Stomach (tissue), 19 donors: ENCODE measurements at regions of chr19 and their contacts with region 1.

Region 1: DNA sequence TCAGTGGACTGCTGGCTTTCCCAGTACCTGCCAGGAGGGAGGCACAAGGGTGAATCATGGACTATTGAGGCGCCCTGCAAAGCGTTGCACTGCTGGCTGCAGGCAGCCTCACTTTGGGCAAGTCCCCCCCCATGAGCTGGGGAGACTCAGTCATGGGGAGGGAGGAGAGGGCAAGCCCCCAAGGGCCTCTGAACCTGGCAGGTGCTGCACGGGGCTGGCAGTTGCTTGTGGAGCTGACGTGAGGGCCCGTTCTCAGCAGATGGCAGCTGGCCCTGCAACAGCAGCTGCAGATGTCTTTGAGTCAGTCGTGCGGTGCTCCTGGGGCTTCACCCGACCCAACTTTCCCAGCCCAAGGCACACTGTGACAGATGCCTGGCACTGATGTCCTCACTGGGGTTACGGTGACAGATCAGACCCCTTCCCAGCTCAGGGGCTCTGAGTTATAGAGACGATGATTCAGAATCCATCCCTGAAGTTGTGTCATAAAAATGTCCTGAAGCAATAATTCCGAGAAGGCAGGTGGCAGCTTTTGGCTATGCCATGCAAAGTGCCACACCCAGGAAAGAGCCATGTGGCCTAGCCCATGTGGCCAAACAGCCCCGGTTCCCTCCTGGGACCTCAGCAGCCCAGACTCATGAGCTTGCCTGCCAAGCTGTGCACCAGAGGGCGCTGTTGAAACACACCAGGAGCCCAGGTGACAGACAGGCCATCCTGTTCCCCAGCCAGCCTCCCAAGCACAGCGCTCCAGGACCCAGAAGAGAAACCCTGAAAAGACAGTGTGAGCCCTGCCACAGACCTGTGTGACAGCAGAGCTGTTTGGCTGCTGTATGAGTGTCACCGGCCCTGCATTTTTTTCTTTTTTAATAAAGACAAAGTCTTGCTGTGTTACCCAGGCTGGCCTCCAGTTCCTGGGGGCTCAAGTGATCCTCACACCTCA is 53.6 kb upstream of the LDLR start:
- DNase-seq: peak; percentile 95
- H3K4me3 ChIP-seq: no peak overlapping the region
- H3K27ac ChIP-seq: peak overlapping the region; percentile 5 to 67 (median 32)
- H3K4me1 ChIP-seq: peaks cover 4 to 16% (median 12%) of the 10 kb centered on the region in 4 donors
- H3K27me3 ChIP-seq: no peaks in the 10 kb centered on the region
- CTCF ChIP-seq: peak in 5 of 7 experiments; percentile 69 to 94 (median 87)
- EP300 ChIP-seq: no peak
- POLR2A ChIP-seq: no peak

Region 2: GRCh38 chr19:10797541-10798256 is 238.0 kb before region 1 on chr19:
- intact Hi-C with region 1: no loop called
- DNase-seq: peak in 1 of 2 donors; percentile 65
- H3K4me3 ChIP-seq: no peak overlapping the region
- H3K27ac ChIP-seq: peak overlapping the region in 1 of 5 donors; percentile 17
- H3K4me1 ChIP-seq: no peaks in the 10 kb centered on the region
- H3K27me3 ChIP-seq: no peaks in the 10 kb centered on the region
- CTCF ChIP-seq: no peak
- EP300 ChIP-seq: no peak
- POLR2A ChIP-seq: no peak

Region 3: DNA sequence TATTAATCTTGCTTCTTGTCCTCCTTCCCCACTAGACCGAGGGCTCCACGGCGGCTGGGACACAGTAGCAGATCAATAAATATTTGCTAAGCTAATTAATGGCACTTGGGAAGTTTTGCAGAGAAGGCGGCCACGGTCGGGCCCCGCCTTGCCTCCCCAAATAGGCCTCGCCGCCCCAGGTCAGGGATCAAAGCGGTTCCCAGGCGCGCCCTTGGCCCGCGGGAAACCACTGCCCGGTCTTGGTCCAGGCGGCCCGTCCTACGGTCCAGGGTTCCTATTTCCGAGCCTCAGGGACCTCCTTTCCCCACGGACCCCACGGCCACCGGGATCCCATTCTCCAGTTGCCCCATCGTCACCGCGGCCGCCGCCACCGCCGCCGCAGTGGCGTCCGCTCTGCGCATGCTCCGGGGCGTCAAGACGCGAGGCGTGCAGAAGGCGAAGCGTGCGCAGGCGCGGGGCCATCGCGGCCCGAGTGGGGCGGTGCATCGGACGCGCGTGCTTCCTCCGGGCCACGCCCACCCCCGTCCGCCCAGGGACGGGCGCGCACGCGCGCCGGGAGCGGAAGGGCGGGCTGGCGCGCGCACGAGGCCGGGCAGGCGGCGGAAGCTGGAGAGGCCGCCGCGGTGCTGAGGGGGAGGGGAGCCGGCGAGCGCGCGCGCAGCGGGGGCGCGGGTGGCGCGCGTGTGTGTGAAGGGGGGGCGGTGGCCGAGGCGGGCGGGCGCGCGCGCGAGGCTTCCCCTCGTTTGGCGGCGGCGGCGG is 75.2 kb before region 1 on chr19 and contains the start of gene SMARCA4:
- intact Hi-C with region 1: no loop called
- DNase-seq: peak; percentile 99 to 100
- H3K4me3 ChIP-seq: peak within 1 kb of the TSS; percentile 81 to 91 (median 90)
- H3K27ac ChIP-seq: peak within 1 kb of the TSS; percentile 90 to 98 (median 96)
- H3K4me1 ChIP-seq: peaks cover 15 to 47% (median 33%) of the 10 kb centered on the region in 4 donors
- H3K27me3 ChIP-seq: no peaks in the 10 kb centered on the region
- CTCF ChIP-seq: no peak
- EP300 ChIP-seq: no peak
- POLR2A ChIP-seq: peak in 2 of 4 donors; percentile 72 to 91
- total RNA-seq, gene SMARCA4: 28.6 to 158 (median 74.5) TPM

Region 4: GRCh38 chr19:11089254-11090053 is 53.7 kb after region 1 on chr19 and contains the start of gene LDLR:
- intact Hi-C with region 1: no loop called
- DNase-seq: peak; percentile 85 to 97
- H3K4me3 ChIP-seq: peak within 1 kb of the TSS; percentile 62 to 67 (median 64)
- H3K27ac ChIP-seq: peak within 1 kb of the TSS; percentile 90 to 100 (median 98)
- H3K4me1 ChIP-seq: peaks cover 57 to 84% (median 68%) of the 10 kb centered on the region in 4 donors
- H3K27me3 ChIP-seq: no peaks in the 10 kb centered on the region
- CTCF ChIP-seq: no peak
- EP300 ChIP-seq: peak; percentile 95
- POLR2A ChIP-seq: peak in 2 of 4 donors; percentile 82 to 86
- total RNA-seq, gene LDLR: 45.5 to 626 (median 149) TPM

Region 5: DNA sequence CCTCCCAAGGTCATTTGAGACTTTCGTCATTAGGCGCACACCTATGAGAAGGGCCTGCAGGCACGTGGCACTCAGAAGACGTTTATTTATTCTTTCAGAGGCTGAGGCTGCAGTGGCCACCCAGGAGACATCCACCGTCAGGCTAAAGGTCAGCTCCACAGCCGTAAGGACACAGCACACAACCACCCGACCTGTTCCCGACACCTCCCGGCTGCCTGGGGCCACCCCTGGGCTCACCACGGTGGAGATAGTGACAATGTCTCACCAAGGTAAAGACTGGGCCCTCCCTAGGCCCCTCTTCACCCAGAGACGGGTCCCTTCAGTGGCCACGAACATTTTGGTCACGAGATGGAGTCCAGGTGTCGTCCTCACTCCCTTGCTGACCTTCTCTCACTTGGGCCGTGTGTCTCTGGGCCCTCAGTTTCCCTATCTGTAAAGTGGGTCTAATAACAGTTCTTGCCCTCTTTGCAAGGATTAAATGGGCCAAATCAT is 87.4 kb after region 1 on chr19:
- intact Hi-C with region 1: loop called (anchors 5 kb)
- DNase-seq: no peak
- H3K4me3 ChIP-seq: no peak overlapping the region
- H3K27ac ChIP-seq: no peak overlapping the region
- H3K4me1 ChIP-seq: peaks cover 0 to 8% (median 5%) of the 10 kb centered on the region in 4 donors
- H3K27me3 ChIP-seq: no peaks in the 10 kb centered on the region
- CTCF ChIP-seq: no peak
- EP300 ChIP-seq: no peak
- POLR2A ChIP-seq: no peak

Region 6: DNA sequence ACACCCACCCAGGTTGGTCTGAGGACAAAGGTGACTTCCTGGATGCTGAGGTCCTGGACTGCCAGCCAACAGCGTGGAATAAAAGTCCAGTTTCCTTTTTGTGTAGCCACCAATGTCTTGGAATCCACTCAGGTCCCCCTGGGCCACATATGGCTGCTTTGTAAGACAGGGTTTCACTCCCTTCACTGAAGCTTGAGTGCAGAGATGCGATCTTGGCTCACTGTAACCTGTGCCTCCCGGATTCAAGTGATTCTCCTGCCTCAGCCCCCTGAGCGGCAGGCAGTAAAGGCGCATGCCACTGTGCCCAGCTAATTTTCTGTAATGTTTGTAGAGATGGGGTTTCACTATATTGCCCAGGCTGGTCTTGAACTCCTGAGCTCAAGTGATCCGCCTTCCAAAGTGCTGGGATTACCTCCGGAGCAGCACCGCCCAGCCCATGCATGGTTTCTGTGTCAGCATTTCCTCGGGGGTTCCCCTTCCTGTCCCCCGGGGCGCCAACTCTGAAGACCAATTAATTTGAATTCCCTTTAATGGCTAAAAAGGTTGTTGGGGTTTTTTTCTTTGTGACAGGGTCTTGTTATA is 144.1 kb after region 1 on chr19:
- intact Hi-C with region 1: no loop called
- DNase-seq: no peak
- H3K4me3 ChIP-seq: peak overlapping the region in 1 of 4 donors; percentile 9
- H3K27ac ChIP-seq: peak overlapping the region in 4 of 5 donors; percentile 61 to 94 (median 72)
- H3K4me1 ChIP-seq: peaks cover 25 to 55% (median 37%) of the 10 kb centered on the region in 4 donors
- H3K27me3 ChIP-seq: no peaks in the 10 kb centered on the region
- CTCF ChIP-seq: no peak
- EP300 ChIP-seq: no peak
- POLR2A ChIP-seq: no peak

Region 7: DNA sequence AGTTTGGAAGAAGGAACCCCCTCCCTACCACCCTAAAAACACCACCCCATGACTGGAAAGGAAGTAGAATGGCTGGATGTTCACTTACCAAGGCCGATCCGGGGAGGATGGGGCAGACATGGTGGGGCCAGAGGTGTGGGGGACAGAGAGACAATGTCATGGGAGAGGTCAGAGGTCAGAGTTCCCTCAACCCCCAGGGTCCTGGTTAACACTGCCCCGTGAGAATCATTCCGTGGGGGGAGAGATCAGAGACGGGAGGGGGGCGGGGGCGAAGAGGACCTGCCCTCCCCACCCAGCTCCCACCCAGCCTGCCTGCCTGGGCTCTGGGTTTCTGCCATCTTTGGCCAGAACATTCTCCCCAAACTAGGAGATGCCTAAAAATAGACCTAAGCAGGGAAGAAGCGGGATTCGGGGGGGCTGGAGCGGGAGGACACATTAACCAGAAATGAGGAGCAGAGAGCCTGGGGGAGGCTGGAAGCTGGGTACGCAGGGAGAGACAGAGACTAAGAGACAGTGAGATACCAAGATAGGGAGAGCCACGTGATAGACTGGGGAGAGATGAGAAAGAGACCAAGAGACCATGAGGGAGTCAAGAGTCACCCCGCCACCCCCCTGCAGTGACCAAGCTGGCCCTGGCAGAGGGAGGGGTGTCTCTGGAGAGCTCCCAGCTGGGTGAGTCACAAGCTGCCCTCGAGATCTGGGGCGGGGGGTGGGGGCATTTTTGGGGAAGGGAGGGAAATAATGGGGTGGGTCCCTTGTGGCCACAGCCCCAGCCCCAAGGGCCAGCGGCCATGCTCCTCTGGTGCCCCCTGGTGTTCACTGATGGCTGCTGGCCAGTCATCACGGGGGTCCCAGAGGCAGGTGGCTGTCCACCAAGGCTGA is 167.7 kb after region 1 on chr19:
- intact Hi-C with region 1: loop called (anchors 10 kb)
- DNase-seq: peak; percentile 59 to 89
- H3K4me3 ChIP-seq: peak overlapping the region in 1 of 4 donors; percentile 13
- H3K27ac ChIP-seq: peak overlapping the region; percentile 61 to 94 (median 82)
- H3K4me1 ChIP-seq: peaks cover 1 to 49% (median 28%) of the 10 kb centered on the region in 4 donors
- H3K27me3 ChIP-seq: no peaks in the 10 kb centered on the region
- CTCF ChIP-seq: peak in 5 of 7 experiments; percentile 70 to 91 (median 82)
- EP300 ChIP-seq: no peak
- POLR2A ChIP-seq: no peak